Activated T-helper 1 cell treated with anti-CD3 and anti-CD28 coated beads, Interleukin-12 subunit alpha, Interleukin-12 subunit beta, Interleukin-2, Interleukin-4 antibody, amounts not matched to agents 30 ng/mL and 10 ng/mL and 1 ng/mL, durations not matched to agents 14 hours and 24 hours and 36 hours (primary cell): ENCODE measurements at regions of chrX and their contacts with region 1.

Region 1: DNA sequence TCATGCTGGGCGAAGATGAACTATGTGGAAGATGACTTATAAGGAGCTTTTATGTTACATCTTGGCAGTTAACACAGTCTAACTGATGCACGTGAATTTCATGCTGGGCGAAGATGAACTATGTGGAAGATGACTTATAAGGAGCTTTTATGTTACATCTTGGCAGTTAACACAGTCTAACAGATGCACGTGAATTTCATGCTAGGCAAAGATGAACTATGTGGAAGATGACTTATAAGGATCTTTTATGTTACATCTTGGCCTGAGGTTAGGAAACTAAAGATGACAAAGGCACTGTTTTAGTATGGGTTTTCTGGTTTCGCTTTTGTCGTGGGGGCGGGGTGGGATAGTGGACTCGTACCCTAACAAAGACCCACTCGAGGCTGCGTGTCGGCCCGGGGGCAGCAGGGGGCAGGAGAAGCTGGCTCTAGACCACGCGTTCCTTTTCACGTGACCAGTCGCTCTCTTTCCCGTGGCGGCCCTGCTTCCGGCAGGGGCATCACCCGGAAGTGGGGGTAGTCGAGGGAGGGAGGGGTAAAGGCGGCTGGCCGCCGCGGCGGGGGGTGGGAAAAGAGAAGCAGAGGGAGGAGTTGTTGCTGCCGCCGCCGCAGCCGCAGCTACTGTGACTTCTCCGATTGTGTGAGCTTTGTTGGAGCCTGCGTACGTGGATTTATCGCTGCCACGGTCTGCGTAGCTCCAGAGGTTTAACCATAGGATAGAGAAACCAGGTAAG is at the start of gene ATP7A:
- DNase-seq: peak; percentile 85
- H3K4me3 Mint-ChIP-seq: peak within 1 kb of the TSS; percentile 98
- H3K27ac Mint-ChIP-seq: peak within 1 kb of the TSS; percentile 97
- H3K4me1 Mint-ChIP-seq: peaks cover 16% of the 10 kb centered on the region
- H3K27me3 Mint-ChIP-seq: no peaks in the 10 kb centered on the region
- total RNA-seq, gene ATP7A: 6.1 and 6.9 TPM in 2 replicates

Region 2: GRCh38 chrX:78066110-78066509 is 155.8 kb after region 1 on chrX:
- intact Hi-C with region 1: loop called (anchors 1 kb)
- DNase-seq: no peak
- H3K4me3 Mint-ChIP-seq: no peak overlapping the region
- H3K27ac Mint-ChIP-seq: no peak overlapping the region
- H3K4me1 Mint-ChIP-seq: peaks cover 30% of the 10 kb centered on the region
- H3K27me3 Mint-ChIP-seq: no peaks in the 10 kb centered on the region